ENCODE measurements at regions of chr6 and their contacts with region 1.

Region 1: DNA sequence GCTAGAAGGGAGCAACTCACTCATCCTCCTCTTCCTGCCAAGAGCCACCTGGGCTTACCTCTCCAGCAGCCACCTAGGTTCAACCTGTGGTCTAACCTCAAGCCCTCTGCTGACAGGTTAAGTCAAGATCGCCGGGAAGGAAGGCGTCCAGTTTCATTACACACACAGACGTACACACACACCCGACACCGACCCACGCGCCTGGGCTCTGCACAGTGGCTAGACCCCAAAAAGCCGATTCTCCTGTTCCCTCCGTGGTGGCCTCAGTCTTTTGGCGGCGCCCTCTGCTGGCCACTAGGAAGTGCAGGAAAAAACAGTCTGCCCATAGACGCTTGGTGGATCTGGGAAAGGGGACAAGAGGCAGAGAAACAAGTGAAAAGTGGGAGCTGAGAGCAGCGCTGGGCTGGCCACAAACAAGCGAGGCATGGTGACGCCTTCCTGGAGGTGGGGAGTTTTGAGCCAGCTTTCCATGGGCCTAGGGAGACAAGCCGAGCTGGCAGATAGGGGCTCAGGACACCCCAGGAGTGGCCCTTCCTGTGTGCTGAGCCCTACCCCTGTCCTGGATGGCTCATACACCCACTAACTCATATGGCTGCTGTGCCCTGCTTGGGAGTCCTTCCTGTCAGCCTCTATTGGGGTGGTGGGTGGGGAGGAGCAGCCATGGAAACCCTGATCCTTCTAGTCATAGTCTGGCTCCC is 52.7 kb downstream of the MRPL14 start:
- H3K4me3 Mint-ChIP-seq: peak overlapping the region; percentile 54
- H3K27ac Mint-ChIP-seq: peak overlapping the region; percentile 67
- H3K4me1 Mint-ChIP-seq: peaks cover 41% of the 10 kb centered on the region
- H3K27me3 Mint-ChIP-seq: peaks cover 86% of the 10 kb centered on the region

Region 2: DNA sequence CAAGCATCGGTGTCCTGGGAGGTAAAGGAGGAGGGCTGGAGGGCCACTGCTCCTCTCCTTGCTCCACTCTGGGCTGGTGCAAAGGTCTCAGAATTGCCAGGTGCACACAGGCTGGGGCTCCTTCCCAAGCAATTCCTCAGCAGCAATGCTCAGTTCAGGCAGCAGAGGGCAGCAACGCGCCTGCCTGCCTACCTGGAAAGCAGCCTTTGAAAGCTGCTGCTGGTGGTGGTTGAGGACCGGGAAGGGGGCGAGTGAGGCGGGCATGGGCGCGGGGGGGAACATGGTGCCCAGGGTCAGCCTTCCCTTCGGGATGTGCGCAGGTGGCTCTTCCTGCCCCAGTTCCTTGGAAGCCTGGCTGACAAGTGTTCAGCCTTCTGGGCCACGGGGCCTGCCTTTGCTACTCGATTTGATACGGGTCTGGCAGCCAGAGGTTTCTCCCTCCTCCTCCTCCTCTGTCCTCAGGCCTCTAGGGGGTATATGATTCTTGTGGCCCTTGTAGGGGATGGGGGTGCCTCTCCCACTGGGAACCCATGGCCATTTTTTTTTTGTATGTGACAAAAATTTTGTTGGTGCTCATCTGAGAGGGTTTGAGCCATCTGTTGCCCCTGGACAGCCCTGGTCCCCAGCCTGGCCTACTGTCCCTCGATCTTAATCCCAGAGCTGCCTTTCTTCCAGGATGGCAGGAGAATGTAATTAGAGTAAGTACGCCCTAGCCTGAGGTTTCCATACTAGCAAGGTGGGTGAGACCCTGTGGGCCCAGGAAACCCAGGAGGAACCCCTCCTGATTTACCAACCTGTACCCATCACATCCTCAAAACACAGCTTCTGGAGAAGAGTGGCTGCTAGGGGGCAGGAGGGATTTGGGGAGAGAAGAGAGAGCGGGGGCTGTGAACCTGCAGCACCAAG is 407.1 kb before region 1 on chr6:
- intact Hi-C with region 1: loop called (anchors 1 kb)
- H3K4me3 Mint-ChIP-seq: no peak overlapping the region
- H3K27ac Mint-ChIP-seq: no peak overlapping the region
- H3K4me1 Mint-ChIP-seq: peaks cover 28% of the 10 kb centered on the region
- H3K27me3 Mint-ChIP-seq: peaks cover 32% of the 10 kb centered on the region

Region 3: GRCh38 chr6:43723737-43724295 is 350.8 kb before region 1 on chr6:
- intact Hi-C with region 1: loop called (anchors 1 kb)
- H3K4me3 Mint-ChIP-seq: no peak overlapping the region
- H3K27ac Mint-ChIP-seq: peak overlapping the region; percentile 30
- H3K4me1 Mint-ChIP-seq: peaks cover 49% of the 10 kb centered on the region
- H3K27me3 Mint-ChIP-seq: peaks cover 86% of the 10 kb centered on the region

Region 4: DNA sequence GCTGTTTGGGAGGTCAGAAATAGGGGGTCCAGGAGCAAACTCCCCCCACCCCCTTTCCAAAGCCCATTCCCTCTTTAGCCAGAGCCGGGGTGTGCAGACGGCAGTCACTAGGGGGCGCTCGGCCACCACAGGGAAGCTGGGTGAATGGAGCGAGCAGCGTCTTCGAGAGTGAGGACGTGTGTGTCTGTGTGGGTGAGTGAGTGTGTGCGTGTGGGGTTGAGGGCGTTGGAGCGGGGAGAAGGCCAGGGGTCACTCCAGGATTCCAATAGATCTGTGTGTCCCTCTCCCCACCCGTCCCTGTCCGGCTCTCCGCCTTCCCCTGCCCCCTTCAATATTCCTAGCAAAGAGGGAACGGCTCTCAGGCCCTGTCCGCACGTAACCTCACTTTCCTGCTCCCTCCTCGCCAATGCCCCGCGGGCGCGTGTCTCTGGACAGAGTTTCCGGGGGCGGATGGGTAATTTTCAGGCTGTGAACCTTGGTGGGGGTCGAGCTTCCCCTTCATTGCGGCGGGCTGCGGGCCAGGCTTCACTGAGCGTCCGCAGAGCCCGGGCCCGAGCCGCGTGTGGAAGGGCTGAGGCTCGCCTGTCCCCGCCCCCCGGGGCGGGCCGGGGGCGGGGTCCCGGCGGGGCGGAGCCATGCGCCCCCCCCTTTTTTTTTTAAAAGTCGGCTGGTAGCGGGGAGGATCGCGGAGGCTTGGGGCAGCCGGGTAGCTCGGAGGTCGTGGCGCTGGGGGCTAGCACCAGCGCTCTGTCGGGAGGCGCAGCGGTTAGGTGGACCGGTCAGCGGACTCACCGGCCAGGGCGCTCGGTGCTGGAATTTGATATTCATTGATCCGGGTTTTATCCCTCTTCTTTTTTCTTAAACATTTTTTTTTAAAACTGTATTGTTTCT is 304.8 kb before region 1 on chr6 and contains the start of gene VEGFA:
- intact Hi-C with region 1: loop called (anchors 1 kb)
- H3K4me3 Mint-ChIP-seq: peak within 1 kb of the TSS; percentile 84
- H3K27ac Mint-ChIP-seq: peak within 1 kb of the TSS; percentile 90
- H3K4me1 Mint-ChIP-seq: peaks cover 45% of the 10 kb centered on the region
- H3K27me3 Mint-ChIP-seq: peaks cover 30% of the 10 kb centered on the region

Region 5: DNA sequence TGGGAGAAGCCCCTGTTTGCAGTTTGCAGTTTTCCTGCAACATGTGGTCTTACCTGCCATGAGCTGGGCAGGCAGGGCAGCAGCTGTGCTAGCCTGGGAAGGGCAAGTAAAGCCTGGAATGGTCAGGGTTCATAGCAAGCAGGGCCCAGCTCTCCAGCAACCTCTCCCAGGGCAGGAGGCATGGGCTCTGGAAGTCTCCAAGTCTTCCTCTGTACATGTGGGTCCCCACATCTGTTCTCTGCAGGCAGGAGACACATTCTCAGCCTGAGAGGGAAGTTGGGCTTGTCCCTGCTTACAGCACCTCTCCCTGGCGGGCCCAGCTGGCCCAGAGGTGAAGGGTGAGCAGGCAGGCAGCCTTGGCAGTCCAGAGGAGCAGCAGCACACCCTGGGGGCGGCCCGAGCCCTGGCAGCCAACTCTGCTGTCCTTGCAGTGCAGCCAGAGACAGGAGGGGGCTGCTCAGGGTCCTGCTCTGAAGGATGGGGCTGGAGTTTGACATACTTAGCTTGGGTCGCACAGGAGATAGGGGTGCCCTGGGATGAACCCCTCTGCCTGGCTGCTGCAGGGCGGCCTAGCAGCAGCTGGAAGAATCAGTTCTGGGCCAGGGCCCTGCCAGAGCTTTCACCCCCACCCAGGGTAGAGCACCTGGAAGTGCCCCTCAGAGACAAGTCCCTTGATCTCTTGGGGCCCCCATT is 123.4 kb before region 1 on chr6:
- intact Hi-C with region 1: loop called (anchors 1 kb)
- H3K4me3 Mint-ChIP-seq: no peak overlapping the region
- H3K27ac Mint-ChIP-seq: peak overlapping the region; percentile 17
- H3K4me1 Mint-ChIP-seq: peaks cover 7% of the 10 kb centered on the region
- H3K27me3 Mint-ChIP-seq: peaks cover 22% of the 10 kb centered on the region

Region 6: GRCh38 chr6:43977404-43978111 is 97.0 kb before region 1 on chr6:
- intact Hi-C with region 1: loop called (anchors 5 kb)
- H3K4me3 Mint-ChIP-seq: no peak overlapping the region
- H3K27ac Mint-ChIP-seq: peak overlapping the region; percentile 83
- H3K4me1 Mint-ChIP-seq: peaks cover 37% of the 10 kb centered on the region
- H3K27me3 Mint-ChIP-seq: peaks cover 27% of the 10 kb centered on the region

Region 7: GRCh38 chr6:44002593-44003344 is 71.8 kb before region 1 on chr6:
- intact Hi-C with region 1: loop called (anchors 5 kb)
- H3K4me3 Mint-ChIP-seq: peak overlapping the region; percentile 60
- H3K27ac Mint-ChIP-seq: peak overlapping the region; percentile 32
- H3K4me1 Mint-ChIP-seq: peaks cover 55% of the 10 kb centered on the region
- H3K27me3 Mint-ChIP-seq: peaks cover 85% of the 10 kb centered on the region

Measured in dendritic cell treated with granulocyte-macrophage colony-stimulating factor and Interleukin-4, amounts not matched to agents 40 ng/mL and 50 ng/mL, for 4 days (primary cell).